ENCODE measurements at regions of chr17 and their contacts with region 1.

Region 1: GRCh38 chr17:18038861-18039534 is at the starts of genes ATPAF2 and GID4:
- DNase-seq: peak; percentile 97
- ATAC-seq: peak; percentile 92
- H3K4me3 ChIP-seq: peak within 1 kb of the TSS; percentile 84 to 85
- H3K27ac ChIP-seq: peak within 1 kb of the TSS; percentile 80
- H3K4me1 ChIP-seq: peaks cover 6 to 21% of the 10 kb centered on the region in 2 experiments; a peak in 3 of 4 replicates
- H3K27me3 ChIP-seq: no peaks in the 10 kb centered on the region
- CTCF ChIP-seq: peak in 1 of 3 experiments; percentile 12; a peak in 1 of 6 replicates
- POLR2A ChIP-seq: peak; percentile 59
- RAD21 ChIP-seq: no peak
- total RNA-seq, gene ATPAF2: 46.1 TPM
- total RNA-seq, gene GID4: 10.8 TPM

Region 2: DNA sequence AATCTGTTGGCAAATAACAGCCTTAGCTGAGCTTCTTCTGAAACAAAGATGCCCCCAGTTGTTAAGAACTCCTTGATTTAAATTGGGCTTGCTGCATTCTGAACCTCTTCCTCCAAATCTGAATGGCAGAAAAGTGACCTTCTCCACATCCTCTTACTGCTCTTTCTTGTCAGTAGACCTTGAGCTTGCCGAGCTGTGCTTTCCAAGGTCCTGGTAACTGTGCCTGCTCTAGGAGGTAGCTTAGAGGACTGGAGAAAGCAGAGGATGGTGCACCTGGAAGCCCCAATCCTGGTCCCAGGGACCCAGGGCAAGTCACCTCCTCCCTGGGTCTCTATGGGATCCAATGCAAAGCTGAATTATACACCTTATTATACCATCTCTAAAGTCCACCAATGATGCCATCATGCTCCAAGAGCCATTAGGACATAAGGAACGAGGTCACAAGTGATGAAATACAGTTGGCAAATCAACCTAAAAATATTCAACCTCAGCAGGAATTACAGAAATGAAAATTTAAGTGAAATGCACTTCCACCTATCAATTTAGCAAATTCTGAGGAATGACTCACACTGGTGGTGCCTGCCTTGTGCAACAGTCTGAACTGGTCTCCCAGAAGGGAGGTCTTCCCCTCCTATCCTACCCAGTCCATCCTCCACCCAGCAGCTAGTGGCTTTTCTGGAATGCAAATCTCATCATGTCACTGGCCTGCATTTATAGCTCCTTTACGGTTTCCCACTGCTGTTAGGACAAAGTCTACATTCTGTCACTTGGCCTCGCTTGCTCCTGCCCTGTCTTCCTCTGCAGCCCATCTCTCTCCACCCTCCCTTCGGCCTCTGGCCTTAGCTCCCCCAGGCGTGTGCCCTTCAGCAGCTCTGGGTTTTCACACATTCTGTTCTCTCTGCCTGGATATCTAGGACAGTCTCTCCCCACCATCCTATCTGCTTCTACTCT is 103.4 kb before region 1 on chr17:
- CTCF ChIA-PET with region 1: no interaction called
- POLR2A ChIA-PET with region 1: no interaction called
- RAD21 ChIA-PET with region 1: no interaction called
- intact Hi-C with region 1: no loop called
- DNase-seq: no peak
- ATAC-seq: no peak; the same call in 1 of the 2 replicates
- H3K4me3 ChIP-seq: no peak overlapping the region
- H3K27ac ChIP-seq: no peak overlapping the region
- H3K4me1 ChIP-seq: peaks cover 46 to 58% of the 10 kb centered on the region in 2 experiments
- H3K27me3 ChIP-seq: no peaks in the 10 kb centered on the region
- CTCF ChIP-seq: no peak
- POLR2A ChIP-seq: no peak
- RAD21 ChIP-seq: no peak

Region 3: GRCh38 chr17:17994271-17995069 is 44.5 kb before region 1 on chr17:
- CTCF ChIA-PET with region 1: no interaction called
- POLR2A ChIA-PET with region 1: no interaction called
- RAD21 ChIA-PET with region 1: no interaction called
- intact Hi-C with region 1: loop called (anchors 5 kb)
- DNase-seq: peak; percentile 15
- ATAC-seq: peak; percentile 83
- H3K4me3 ChIP-seq: no peak overlapping the region
- H3K27ac ChIP-seq: no peak overlapping the region; the same call in 1 of the 2 replicates
- H3K4me1 ChIP-seq: peaks cover 18 to 35% of the 10 kb centered on the region in 2 experiments
- H3K27me3 ChIP-seq: no peaks in the 10 kb centered on the region
- CTCF ChIP-seq: peak; percentile 20 to 62 (median 55); a peak in 5 of 6 replicates
- POLR2A ChIP-seq: no peak
- RAD21 ChIP-seq: peak; percentile 41; the same call in 1 of the 2 replicates

Region 4: DNA sequence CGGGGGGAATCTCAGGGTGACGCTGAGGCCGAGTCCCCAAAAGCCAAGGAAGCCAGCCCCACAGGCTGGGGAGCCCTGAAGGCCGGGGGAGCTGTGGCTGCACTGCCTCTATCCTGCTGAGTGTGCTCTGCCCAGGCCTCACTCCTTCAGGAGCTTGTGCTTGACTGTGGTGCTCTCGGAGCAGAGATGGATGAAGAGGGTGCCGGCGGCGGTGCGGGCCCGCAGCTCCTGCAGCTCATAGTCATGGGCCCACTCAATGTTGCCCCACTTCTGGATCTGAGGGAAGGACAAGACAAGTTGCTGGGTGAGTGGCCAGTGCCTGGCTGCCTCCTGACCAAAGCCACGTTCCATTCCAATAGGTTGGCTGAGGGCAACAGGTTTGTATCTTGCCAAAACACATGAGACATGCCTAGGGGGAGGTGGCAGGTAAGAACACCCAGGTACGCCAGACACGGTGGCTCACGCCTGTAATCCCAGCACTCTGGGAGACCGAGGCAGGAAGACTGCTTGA is 20.5 kb before region 1 on chr17:
- CTCF ChIA-PET with region 1: no interaction called
- POLR2A ChIA-PET with region 1: no interaction called
- RAD21 ChIA-PET with region 1: no interaction called
- intact Hi-C with region 1: no loop called
- DNase-seq: no peak
- ATAC-seq: no peak
- H3K4me3 ChIP-seq: no peak overlapping the region
- H3K27ac ChIP-seq: no peak overlapping the region
- H3K4me1 ChIP-seq: no peaks in the 10 kb centered on the region
- H3K27me3 ChIP-seq: no peaks in the 10 kb centered on the region
- CTCF ChIP-seq: no peak
- POLR2A ChIP-seq: no peak
- RAD21 ChIP-seq: no peak

Region 5: GRCh38 chr17:18102640-18103039 is 63.6 kb after region 1 on chr17:
- CTCF ChIA-PET with region 1: no interaction called
- POLR2A ChIA-PET with region 1: no interaction called
- RAD21 ChIA-PET with region 1: no interaction called
- intact Hi-C with region 1: no loop called
- DNase-seq: no peak
- ATAC-seq: no peak
- H3K4me3 ChIP-seq: no peak overlapping the region
- H3K27ac ChIP-seq: no peak overlapping the region
- H3K4me1 ChIP-seq: no peaks in the 10 kb centered on the region
- H3K27me3 ChIP-seq: no peaks in the 10 kb centered on the region
- CTCF ChIP-seq: no peak
- POLR2A ChIP-seq: no peak
- RAD21 ChIP-seq: no peak